Activated CD4-positive, alpha-beta T cell treated with anti-CD3 and anti-CD28 coated beads, Interleukin-2, amount 10 ng/mL, durations not matched to agents 24 days and 14 days (primary cell): ENCODE measurements at regions of chr17 and their contacts with region 1.

Region 1: DNA sequence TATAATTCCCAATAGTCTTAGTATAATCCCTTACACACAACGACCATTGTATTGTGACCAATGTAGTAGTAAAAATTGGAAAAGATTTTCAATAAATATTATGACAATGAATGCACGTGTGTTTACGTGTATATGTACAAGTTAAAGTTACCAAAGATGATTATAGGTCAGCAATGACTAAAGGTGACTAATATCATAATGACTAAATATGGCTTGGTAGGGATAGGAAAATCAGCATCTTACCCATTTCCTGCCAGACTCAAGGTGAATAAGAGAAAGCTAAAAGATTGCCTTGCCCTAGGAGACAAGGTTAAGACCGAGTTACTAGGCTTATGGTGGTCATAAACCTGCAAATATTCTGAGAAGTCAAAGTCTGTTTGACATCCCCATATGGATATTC is 34.4 kb downstream of the CPD start:
- DNase-seq: no peak
- H3K4me3 Mint-ChIP-seq: peak overlapping the region; percentile 4
- H3K27ac Mint-ChIP-seq: peak overlapping the region; percentile 69
- H3K4me1 Mint-ChIP-seq: peaks cover 24% of the 10 kb centered on the region
- H3K27me3 Mint-ChIP-seq: no peaks in the 10 kb centered on the region

Region 2: GRCh38 chr17:30363715-30364202 is 49.4 kb before region 1 on chr17:
- intact Hi-C with region 1: loop called (anchors 1 kb)
- DNase-seq: peak; percentile 92
- H3K4me3 Mint-ChIP-seq: peak overlapping the region; percentile 36
- H3K27ac Mint-ChIP-seq: peak overlapping the region; percentile 89
- H3K4me1 Mint-ChIP-seq: peaks cover 26% of the 10 kb centered on the region
- H3K27me3 Mint-ChIP-seq: peaks cover 3% of the 10 kb centered on the region